Adrenal gland (tissue), 19 donors: ENCODE measurements at regions of chr6 and their contacts with region 1.

Region 1: DNA sequence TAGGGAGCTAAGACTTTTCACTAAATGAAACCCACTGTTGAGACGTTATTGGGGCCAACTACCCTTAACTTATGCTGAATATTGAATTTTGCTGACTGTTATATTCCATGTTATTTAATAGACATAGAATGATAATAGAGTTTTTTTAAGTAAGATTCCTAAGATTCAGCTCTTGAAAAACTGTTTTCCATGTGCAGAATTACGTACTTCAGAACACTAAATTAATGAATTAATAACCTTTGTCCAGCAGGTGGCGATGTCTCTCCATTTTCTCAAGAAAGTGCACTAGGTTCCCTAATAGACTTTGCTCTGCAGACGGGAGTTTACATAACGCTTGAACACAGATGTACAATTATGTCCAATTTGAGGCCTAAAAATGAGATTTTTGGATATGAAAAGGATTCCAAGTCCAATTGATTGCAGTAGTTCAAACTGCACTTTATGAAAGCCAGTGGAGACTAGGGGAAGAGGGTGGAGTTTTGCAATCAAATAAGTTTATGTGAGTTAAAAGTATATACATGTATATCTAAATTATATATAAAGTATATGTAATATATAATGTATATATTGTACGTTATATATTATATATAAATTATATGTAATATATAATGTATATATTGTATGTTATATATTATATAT is 282.1 kb downstream of the UST start:
- DNase-seq: peak; percentile 64 to 87 (median 80)
- H3K4me3 ChIP-seq: no peak overlapping the region
- H3K27ac ChIP-seq: no peak overlapping the region
- H3K4me1 ChIP-seq: peaks cover 24 to 35% of the 10 kb centered on the region in 2 donors
- H3K27me3 ChIP-seq: no peaks in the 10 kb centered on the region
- CTCF ChIP-seq: peak; percentile 71 to 91 (median 83)
- POLR2A ChIP-seq: no peak

Region 2: GRCh38 chr6:149082286-149082707 is 53.4 kb after region 1 on chr6:
- intact Hi-C with region 1: loop called in 1 of 2 experiments (anchors 5 kb)
- DNase-seq: peak; percentile 76 to 95 (median 86)
- H3K4me3 ChIP-seq: no peak overlapping the region
- H3K27ac ChIP-seq: no peak overlapping the region
- H3K4me1 ChIP-seq: peaks cover 0 to 16% of the 10 kb centered on the region in 2 donors
- H3K27me3 ChIP-seq: no peaks in the 10 kb centered on the region
- CTCF ChIP-seq: peak; percentile 68 to 91 (median 86)
- POLR2A ChIP-seq: no peak

Region 3: DNA sequence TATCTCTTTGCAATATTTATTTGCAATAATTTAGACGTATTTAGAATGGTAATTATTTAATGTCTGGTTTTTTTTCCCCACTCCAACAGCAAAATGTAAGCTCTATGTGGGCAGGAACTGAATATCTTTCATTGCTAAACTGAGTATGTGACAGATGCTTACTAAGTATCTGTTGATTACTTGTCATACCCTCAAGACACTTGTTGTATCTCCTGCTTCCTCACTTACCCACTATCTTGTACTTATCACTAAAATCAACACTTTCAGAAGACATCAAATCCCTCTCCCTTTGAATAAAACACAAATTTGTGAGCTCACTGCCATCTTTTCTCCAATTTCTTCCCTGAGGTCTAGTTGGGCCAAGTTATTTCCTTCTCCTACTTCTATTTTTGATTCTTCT is 486.6 kb after region 1 on chr6:
- intact Hi-C with region 1: loop called in 1 of 2 experiments (anchors 5 kb)
- DNase-seq: no peak
- H3K4me3 ChIP-seq: no peak overlapping the region
- H3K27ac ChIP-seq: no peak overlapping the region
- H3K4me1 ChIP-seq: no peaks in the 10 kb centered on the region
- H3K27me3 ChIP-seq: no peaks in the 10 kb centered on the region
- CTCF ChIP-seq: no peak
- POLR2A ChIP-seq: no peak